Sigmoid colon (tissue), 7 donors: ENCODE measurements at regions of chr16 and their contacts with region 1.

Region 1: GRCh38 chr16:391885-392335 is 5.1 kb upstream of the NME4 start:
- DNase-seq: no peak
- H3K4me3 ChIP-seq: no peak overlapping the region
- H3K27ac ChIP-seq: no peak overlapping the region
- H3K4me1 ChIP-seq: peaks cover 0 to 38% (median 23%) of the 10 kb centered on the region in 4 donors
- H3K27me3 ChIP-seq: no peaks in the 10 kb centered on the region
- CTCF ChIP-seq: peak; percentile 28 to 62 (median 44)
- EP300 ChIP-seq: no peak
- POLR2A ChIP-seq: no peak

Region 2: DNA sequence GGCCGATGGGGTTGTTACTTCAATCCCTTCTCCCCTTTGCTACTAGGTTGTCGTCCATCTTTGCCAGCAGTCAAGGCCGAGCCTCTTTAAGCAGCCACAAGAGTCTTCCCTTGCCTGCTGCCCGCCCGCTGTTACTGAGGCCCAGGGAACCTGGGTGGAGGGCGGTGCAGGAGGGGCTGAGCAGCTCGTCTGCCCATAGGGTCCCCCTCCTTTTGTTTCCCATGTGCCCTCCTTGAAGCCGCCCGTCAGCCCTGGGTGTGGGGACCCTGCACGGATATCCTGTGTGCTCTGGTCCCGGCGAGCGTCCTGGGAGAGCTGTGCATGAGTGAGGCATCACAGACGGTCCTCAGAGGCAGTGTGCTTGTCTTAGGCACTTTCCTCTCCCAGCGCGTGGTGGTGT is 97.7 kb after region 1 on chr16:
- intact Hi-C with region 1: loop called (anchors 5 kb)
- DNase-seq: no peak
- H3K4me3 ChIP-seq: no peak overlapping the region
- H3K27ac ChIP-seq: no peak overlapping the region
- H3K4me1 ChIP-seq: no peaks in the 10 kb centered on the region
- H3K27me3 ChIP-seq: no peaks in the 10 kb centered on the region
- CTCF ChIP-seq: no peak
- EP300 ChIP-seq: no peak
- POLR2A ChIP-seq: no peak